Colonic mucosa (tissue), 4 donors: ENCODE measurements at regions of chr3 and their contacts with region 1.

Region 1: GRCh38 chr3:20185701-20186598 is at the start of gene SGO1:
- DNase-seq: peak; percentile 100
- H3K4me3 ChIP-seq: peak within 1 kb of the TSS; percentile 59
- H3K27ac ChIP-seq: peak within 1 kb of the TSS; percentile 95
- H3K4me1 ChIP-seq: no peaks in the 10 kb centered on the region
- H3K27me3 ChIP-seq: no peaks in the 10 kb centered on the region
- CTCF ChIP-seq: no peak
- total RNA-seq, gene SGO1: 4.0 to 19.5 TPM

Region 2: DNA sequence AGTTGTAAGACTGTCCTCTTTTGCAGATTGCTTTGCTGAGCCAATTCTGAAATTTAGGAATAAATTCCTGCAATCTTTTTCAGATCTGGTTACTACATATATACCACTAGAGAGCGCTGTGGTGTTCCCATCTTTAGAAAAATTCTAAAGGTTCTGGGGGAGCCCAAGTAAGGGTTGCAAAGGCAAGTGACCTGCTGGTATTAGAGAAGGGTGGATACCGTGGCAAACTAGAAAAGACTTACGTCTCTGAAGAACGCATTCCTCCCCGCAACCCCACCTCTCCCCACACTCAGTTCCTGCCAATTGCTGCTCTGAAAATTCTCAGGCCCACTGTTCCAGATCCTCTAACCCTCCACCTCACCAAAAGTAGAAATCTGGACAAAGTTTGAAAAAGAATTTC is 300.5 kb before region 1 on chr3:
- intact Hi-C with region 1: loop called (anchors 5 kb)
- DNase-seq: no peak
- H3K4me3 ChIP-seq: no peak overlapping the region
- H3K27ac ChIP-seq: no peak overlapping the region
- H3K4me1 ChIP-seq: peaks cover 4% of the 10 kb centered on the region
- H3K27me3 ChIP-seq: no peaks in the 10 kb centered on the region
- CTCF ChIP-seq: peak; percentile 23

Region 3: DNA sequence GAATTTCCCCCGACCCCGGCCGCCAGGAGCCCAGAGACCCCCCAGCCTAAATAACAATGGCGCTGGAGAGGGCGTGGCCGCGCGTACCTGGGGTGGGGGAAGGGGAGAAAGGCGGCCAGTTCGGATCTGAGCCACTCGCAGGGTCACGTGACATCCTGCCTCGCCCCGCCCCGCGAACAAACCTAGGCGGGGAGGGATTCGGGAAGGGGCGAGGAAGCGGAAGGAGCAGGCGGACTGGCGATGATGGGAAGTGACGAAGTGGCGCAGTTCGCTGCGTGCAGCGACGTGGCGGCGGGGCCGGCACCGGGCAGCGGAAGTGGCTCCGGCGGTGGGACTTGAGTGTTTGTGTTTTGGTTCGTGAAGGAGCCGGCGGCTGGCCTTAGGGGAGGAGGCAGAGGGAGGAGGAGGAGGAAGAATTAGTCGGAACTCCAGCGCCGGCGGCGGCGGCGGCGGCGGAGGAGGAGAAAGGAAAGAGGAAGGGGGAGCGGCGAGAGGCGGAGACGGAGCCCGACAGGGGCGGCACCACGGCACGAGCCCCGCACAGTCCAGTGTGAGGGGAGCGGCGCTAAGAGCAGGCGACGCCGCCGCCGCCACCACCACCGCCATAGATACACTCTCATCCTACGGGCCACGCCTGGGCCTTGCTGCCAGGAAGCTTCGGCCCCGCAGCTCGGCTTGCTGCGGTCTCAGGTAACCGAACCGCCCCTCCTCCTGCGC is 239.0 kb before region 1 on chr3 and contains the start of gene RAB5A:
- intact Hi-C with region 1: loop called (anchors 5 kb)
- DNase-seq: peak; percentile 99
- H3K4me3 ChIP-seq: peak within 1 kb of the TSS; percentile 88
- H3K27ac ChIP-seq: peak within 1 kb of the TSS; percentile 99
- H3K4me1 ChIP-seq: peaks cover 7% of the 10 kb centered on the region
- H3K27me3 ChIP-seq: no peaks in the 10 kb centered on the region
- CTCF ChIP-seq: no peak
- total RNA-seq, gene RAB5A: 40.4 to 87.1 TPM

Region 4: GRCh38 chr3:20047976-20048883 is 137.7 kb before region 1 on chr3:
- intact Hi-C with region 1: loop called (anchors 5 kb)
- DNase-seq: no peak
- H3K4me3 ChIP-seq: no peak overlapping the region
- H3K27ac ChIP-seq: peak overlapping the region; percentile 1
- H3K4me1 ChIP-seq: peaks cover 14% of the 10 kb centered on the region
- H3K27me3 ChIP-seq: no peaks in the 10 kb centered on the region
- CTCF ChIP-seq: no peak